Activated CD4-positive, alpha-beta T cell treated with anti-CD3 and anti-CD28 coated beads for 36 hours (primary cell): ENCODE measurements at regions of chr17 and their contacts with region 1.

Region 1: DNA sequence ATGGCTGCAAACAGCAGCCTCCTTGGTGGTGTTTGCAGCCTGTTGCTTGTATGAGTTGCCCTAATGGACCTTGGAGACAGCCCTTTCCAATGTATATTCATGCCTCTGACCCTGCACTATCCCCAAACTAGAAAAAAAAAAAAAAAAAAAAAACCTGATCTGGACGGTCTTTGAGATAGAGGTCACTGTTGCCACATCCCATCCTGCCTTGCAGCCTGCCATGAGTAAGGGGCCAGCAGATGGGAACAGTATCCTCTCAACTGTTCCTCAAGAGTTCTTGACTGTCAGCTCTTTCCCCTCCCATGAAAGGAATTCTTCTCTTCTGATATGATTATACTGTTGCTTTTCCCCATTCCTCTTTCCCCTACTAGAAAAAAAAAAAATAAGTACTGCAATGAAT is 152.4 kb downstream of the SSH2 start:
- DNase-seq: no peak
- ATAC-seq: no peak
- H3K4me3 Mint-ChIP-seq: no peak overlapping the region
- H3K27ac Mint-ChIP-seq: no peak overlapping the region
- H3K4me1 Mint-ChIP-seq: peaks cover 8% of the 10 kb centered on the region
- H3K27me3 Mint-ChIP-seq: no peaks in the 10 kb centered on the region

Region 2: DNA sequence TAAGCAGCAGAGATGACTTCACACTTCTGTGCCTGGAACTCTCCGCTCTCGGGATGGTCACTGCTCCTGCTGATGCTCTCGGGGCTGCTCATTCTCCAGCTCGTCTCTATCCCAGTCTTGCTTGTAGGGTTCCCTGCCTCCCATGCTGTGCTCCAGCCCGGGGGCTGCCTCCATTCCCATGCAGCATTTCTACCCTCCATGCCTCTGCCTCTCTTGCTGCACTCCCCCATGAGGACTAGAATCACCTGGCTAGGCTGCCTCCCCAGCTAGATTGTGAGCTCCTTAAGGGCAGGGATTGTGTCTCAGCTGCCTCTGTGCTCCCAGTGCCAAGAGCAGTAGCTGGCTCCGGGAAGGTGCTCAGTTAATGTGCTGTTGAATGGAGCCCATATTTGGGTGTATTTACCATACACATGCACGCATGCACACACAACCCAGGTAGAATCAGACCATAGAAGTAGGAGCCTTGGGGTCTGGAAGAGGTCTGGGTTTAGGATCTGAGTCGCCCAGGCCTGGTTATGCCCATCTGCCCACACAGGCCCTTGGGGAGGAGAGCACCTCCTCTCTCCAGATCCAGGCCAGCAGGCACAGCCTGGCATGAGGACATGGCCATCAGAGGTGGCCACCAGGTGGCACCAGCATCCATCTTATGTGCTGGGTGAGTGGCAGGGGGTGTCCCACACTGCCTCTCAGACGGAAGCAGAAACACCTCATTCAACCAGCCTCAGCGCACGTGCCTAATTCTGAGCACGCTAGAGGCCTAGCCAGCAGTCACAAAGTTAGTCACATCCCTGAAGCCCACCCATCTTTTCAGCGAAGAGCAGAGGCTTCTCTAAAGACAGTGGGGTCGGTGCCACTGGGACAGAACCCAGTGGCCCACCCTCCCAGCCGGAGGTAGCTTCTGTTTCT is 197.5 kb before region 1 on chr17:
- CTCF ChIA-PET with region 1: interaction called, 4 read pairs
- POLR2A ChIA-PET with region 1: no interaction called
- intact Hi-C with region 1: loop called (anchors 1 kb)
- DNase-seq: peak; percentile 96
- ATAC-seq: peak; percentile 97
- H3K4me3 Mint-ChIP-seq: no peak overlapping the region
- H3K27ac Mint-ChIP-seq: peak overlapping the region; percentile 72
- H3K4me1 Mint-ChIP-seq: peaks cover 18% of the 10 kb centered on the region
- H3K27me3 Mint-ChIP-seq: no peaks in the 10 kb centered on the region

Region 3: GRCh38 chr17:29653995-29654714 is 123.5 kb before region 1 on chr17:
- CTCF ChIA-PET with region 1: interaction called, 12 read pairs
- POLR2A ChIA-PET with region 1: interaction called, 4 read pairs
- intact Hi-C with region 1: no loop called
- DNase-seq: no peak
- ATAC-seq: no peak
- H3K4me3 Mint-ChIP-seq: no peak overlapping the region
- H3K27ac Mint-ChIP-seq: no peak overlapping the region
- H3K4me1 Mint-ChIP-seq: peaks cover 2% of the 10 kb centered on the region
- H3K27me3 Mint-ChIP-seq: no peaks in the 10 kb centered on the region

Region 4: DNA sequence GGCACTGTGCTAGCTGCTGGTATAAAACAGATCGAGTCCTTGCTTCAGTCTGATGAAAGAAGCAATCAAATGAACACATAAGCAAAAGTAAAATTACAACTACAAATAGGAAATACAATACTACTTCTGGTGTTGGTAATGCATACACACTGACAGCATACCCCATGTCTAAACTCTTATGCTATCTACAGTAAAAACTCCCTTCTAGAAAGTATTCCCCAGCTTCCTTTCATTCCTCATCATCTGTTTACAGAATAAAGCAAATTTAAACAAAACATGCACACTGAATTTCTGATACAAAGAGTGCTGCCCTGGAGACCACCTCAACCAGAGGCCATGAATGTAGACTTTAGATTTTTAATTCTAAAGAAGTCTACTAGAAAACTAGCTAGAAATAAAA is 42.8 kb after region 1 on chr17:
- CTCF ChIA-PET with region 1: no interaction called
- POLR2A ChIA-PET with region 1: no interaction called
- intact Hi-C with region 1: no loop called
- DNase-seq: no peak
- ATAC-seq: no peak
- H3K4me3 Mint-ChIP-seq: no peak overlapping the region
- H3K27ac Mint-ChIP-seq: no peak overlapping the region
- H3K4me1 Mint-ChIP-seq: peaks cover 5% of the 10 kb centered on the region
- H3K27me3 Mint-ChIP-seq: no peaks in the 10 kb centered on the region